ENCODE measurements at regions of chr2 and their contacts with region 1.

Region 1: GRCh38 chr2:166127217-166128155 is at the start of gene SCN1A:
- DNase-seq: no peak
- ATAC-seq: peak; percentile 23 to 26
- total RNA-seq, gene SCN1A: 0.24 to 0.32 TPM

Region 2: GRCh38 chr2:165953655-165954606 is 173.6 kb before region 1 on chr2 and contains the start of gene TTC21B:
- intact Hi-C with region 1: loop called (anchors 1 to 10 kb)
- DNase-seq: peak; percentile 95
- ATAC-seq: peak; percentile 100
- total RNA-seq, gene TTC21B: 13.7 to 14.8 TPM

Region 3: DNA sequence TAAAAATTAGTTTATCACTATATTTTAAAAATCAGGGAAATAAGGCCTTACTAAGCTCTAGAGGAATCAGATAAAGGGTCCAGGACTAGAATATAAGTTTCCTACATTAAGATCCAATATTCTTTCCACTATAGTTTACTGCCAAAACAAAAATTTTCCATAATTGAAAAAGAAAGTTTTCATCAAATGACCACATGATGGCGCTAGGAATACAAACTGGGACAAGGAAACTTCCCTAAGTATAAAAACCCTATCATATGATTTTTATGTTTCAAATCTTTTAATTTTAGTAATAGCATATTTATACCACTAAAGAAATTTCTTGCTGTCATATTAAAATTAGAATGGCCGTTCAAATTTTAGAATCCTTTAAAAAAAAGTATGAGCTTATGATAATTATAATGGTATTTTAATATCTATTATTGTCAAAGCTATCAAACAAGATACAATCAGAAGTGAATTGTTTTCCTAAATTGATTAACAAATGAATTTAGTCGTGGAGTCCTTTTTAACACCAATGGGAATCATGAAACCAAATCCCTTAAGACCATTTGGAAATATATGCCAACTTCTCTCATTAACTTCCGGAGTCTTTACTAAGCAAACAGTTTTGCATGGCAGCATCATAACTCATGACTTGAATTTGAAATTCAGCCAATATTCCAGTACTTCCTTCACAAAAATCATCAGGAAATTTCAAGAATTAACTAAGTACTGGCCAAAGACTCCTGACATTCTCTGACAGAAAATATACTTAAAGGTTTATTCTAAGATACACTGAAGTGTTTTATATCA is 69.9 kb before region 1 on chr2:
- intact Hi-C with region 1: loop called in 1 of 2 experiments (anchors 5 kb)
- DNase-seq: no peak
- ATAC-seq: no peak

Region 4: GRCh38 chr2:166202778-166203177 is 75.3 kb after region 1 on chr2:
- intact Hi-C with region 1: no loop called
- DNase-seq: no peak
- ATAC-seq: no peak